ENCODE measurements at regions of chr4 and their contacts with region 1.

Region 1: DNA sequence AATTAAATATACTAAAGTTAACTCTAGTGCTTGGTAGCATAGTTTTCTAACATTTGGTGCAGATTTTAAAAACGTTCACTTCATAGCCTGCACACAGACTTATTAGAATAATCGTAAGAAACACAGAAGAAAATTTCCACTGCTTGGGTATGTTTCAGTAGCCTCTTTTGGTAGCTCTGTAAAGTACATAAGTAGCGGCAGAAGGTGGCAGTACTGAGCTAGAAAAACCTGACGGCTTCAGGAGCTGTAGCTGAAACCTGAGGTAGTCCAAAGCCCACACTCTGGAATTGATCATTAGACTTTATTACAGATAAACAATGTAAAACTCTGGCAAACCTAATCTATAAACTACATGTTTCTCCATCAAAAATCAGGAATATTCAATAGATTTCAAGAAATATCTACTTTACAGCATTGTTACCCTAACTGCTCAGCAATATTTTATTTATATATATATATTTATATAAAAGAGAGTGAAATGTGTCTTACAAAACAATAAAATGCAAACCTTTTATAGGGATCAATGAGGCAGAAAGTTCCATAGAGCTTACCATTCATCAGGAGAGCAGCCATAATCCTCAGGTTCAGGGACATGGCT is 88.2 kb downstream of the ATP8A1 start:
- DNase-seq: peak; percentile 73 to 79
- H3K4me3 ChIP-seq: no peak overlapping the region
- H3K27ac ChIP-seq: peak overlapping the region in 1 of 3 donors; percentile 11
- H3K4me1 ChIP-seq: peaks cover 14 to 22% of the 10 kb centered on the region in 2 donors
- H3K27me3 ChIP-seq: no peaks in the 10 kb centered on the region
- CTCF ChIP-seq: peak; percentile 32 to 85 (median 72)
- POLR2A ChIP-seq: no peak

Region 2: GRCh38 chr4:42673082-42673425 is 104.3 kb after region 1 on chr4:
- intact Hi-C with region 1: no loop called
- DNase-seq: peak; percentile 92 to 93
- H3K4me3 ChIP-seq: no peak overlapping the region
- H3K27ac ChIP-seq: peak overlapping the region; percentile 77 to 85 (median 80)
- H3K4me1 ChIP-seq: peaks cover 40 to 55% of the 10 kb centered on the region in 2 donors
- H3K27me3 ChIP-seq: no peaks in the 10 kb centered on the region
- CTCF ChIP-seq: no peak
- POLR2A ChIP-seq: peak in 1 of 2 donors; percentile 27

Region 3: GRCh38 chr4:42750091-42750490 is 181.4 kb after region 1 on chr4:
- intact Hi-C with region 1: loop called (anchors 10 kb)
- DNase-seq: peak; percentile 27 to 48
- H3K4me3 ChIP-seq: no peak overlapping the region
- H3K27ac ChIP-seq: no peak overlapping the region
- H3K4me1 ChIP-seq: peaks cover 9 to 10% of the 10 kb centered on the region in 2 donors
- H3K27me3 ChIP-seq: no peaks in the 10 kb centered on the region
- CTCF ChIP-seq: peak in 4 of 6 experiments; percentile 35 to 55 (median 42)
- POLR2A ChIP-seq: no peak

Region 4: DNA sequence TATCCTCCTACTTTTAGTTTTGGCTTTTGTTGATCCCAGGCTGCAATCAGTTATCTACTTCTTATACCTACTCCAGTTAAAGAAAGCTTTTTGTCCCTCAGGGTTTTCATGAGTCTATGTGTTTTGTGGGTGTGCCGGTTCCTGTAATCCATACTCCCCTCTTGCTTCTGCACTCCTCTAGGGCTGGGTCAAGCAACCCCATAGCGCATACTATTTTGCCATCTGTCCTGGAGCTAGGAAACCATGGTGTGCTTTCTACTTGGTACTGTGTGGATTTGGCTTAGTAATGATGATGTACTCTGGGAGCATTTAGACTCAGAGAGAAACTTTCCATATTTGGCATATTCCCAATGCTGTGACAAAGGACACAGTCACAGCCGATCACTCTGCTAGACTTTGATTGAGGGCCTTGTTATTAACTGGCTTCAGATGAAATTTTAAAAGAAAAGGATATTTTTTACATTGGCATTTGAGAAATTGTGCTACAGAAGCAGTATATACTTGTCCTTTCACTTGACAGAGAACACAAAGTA is 237.7 kb after region 1 on chr4:
- intact Hi-C with region 1: no loop called
- DNase-seq: no peak
- H3K4me3 ChIP-seq: no peak overlapping the region
- H3K27ac ChIP-seq: no peak overlapping the region
- H3K4me1 ChIP-seq: no peaks in the 10 kb centered on the region
- H3K27me3 ChIP-seq: no peaks in the 10 kb centered on the region
- CTCF ChIP-seq: no peak
- POLR2A ChIP-seq: no peak

Region 5: DNA sequence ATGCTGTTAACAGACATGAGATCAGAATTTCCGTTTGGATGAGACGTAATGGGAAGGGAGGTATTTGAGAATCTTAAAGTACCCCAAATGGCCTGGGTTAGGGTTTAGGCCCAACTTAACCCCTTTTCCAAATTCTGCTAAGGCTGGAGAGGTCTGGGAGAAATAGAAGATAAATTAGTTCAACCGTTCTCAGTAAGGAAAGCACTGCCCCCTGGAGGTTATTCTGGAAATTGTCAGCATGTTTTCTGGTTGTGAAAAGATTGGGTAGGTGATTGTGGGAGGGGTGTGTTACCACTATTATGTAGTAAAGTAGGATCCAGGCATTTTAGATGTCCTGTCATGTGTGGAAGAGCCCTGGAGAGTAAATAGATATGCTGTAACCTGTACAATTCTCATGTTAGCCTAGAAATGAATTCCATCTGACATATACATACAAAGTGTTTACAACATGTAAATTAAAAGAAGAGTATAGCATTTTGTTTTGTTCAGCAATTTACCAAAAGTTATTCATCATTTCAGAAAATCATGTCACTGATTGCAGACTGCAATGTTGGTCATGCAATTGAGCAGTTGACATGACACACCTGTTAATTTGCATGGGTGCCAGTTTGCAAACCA is 297.0 kb after region 1 on chr4:
- intact Hi-C with region 1: loop called (anchors 5 kb)
- DNase-seq: peak; percentile 52 to 54
- H3K4me3 ChIP-seq: no peak overlapping the region
- H3K27ac ChIP-seq: no peak overlapping the region
- H3K4me1 ChIP-seq: no peaks in the 10 kb centered on the region
- H3K27me3 ChIP-seq: no peaks in the 10 kb centered on the region
- CTCF ChIP-seq: peak; percentile 61 to 82 (median 72)
- POLR2A ChIP-seq: no peak